ENCODE measurements at regions of chr3 and their contacts with region 1.

Region 1: GRCh38 chr3:59456852-59457485 is 407.1 kb upstream of the CFAP20DC start:
- DNase-seq: peak; percentile 42
- H3K4me3 Mint-ChIP-seq: peak overlapping the region; percentile 27
- H3K27ac Mint-ChIP-seq: peak overlapping the region; percentile 41
- H3K4me1 Mint-ChIP-seq: peaks cover 59% of the 10 kb centered on the region
- H3K27me3 Mint-ChIP-seq: peaks cover 4% of the 10 kb centered on the region

Region 2: DNA sequence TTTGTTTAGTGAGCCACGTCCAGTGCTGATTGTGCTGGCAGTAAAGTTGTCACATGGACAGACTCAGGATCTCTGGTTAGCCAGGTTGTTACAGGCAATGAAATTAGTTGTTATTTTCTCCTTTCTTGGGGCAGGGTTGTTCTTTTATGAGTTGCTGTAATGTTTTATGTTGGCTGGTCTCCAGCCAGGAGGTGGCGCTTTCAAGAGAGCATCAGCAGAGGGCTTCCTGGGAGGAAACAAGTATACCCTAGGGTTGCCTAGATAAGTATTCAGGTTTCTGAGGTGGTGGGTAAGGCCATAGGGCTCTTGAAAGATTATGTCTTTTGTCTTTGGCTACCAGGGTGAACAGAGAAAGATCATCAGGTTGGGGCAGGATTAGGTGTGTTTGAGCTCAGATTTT is 392.7 kb before region 1 on chr3:
- intact Hi-C with region 1: no loop called
- DNase-seq: no peak
- H3K4me3 Mint-ChIP-seq: no peak overlapping the region
- H3K27ac Mint-ChIP-seq: no peak overlapping the region
- H3K4me1 Mint-ChIP-seq: no peaks in the 10 kb centered on the region
- H3K27me3 Mint-ChIP-seq: peaks cover 49% of the 10 kb centered on the region

Region 3: GRCh38 chr3:59406943-59407342 is 50.0 kb before region 1 on chr3:
- intact Hi-C with region 1: no loop called
- DNase-seq: no peak
- H3K4me3 Mint-ChIP-seq: no peak overlapping the region
- H3K27ac Mint-ChIP-seq: peak overlapping the region; percentile 31
- H3K4me1 Mint-ChIP-seq: peaks cover 28% of the 10 kb centered on the region
- H3K27me3 Mint-ChIP-seq: no peaks in the 10 kb centered on the region

Region 4: GRCh38 chr3:59469948-59470723 is 13.2 kb after region 1 on chr3:
- intact Hi-C with region 1: loop called (anchors 1 kb)
- DNase-seq: no peak
- H3K4me3 Mint-ChIP-seq: no peak overlapping the region
- H3K27ac Mint-ChIP-seq: peak overlapping the region; percentile 64
- H3K4me1 Mint-ChIP-seq: peaks cover 38% of the 10 kb centered on the region
- H3K27me3 Mint-ChIP-seq: no peaks in the 10 kb centered on the region

Measured in activated T-helper 1 cell treated with anti-CD3 and anti-CD28 coated beads, Interleukin-12 subunit alpha, Interleukin-12 subunit beta, Interleukin-2, Interleukin-4 antibody, amounts not matched to agents 30 ng/mL and 10 ng/mL and 1 ng/mL, durations not matched to agents 14 hours and 24 hours and 36 hours (primary cell).